ENCODE measurements at regions of chr20 and their contacts with region 1.

Region 1: DNA sequence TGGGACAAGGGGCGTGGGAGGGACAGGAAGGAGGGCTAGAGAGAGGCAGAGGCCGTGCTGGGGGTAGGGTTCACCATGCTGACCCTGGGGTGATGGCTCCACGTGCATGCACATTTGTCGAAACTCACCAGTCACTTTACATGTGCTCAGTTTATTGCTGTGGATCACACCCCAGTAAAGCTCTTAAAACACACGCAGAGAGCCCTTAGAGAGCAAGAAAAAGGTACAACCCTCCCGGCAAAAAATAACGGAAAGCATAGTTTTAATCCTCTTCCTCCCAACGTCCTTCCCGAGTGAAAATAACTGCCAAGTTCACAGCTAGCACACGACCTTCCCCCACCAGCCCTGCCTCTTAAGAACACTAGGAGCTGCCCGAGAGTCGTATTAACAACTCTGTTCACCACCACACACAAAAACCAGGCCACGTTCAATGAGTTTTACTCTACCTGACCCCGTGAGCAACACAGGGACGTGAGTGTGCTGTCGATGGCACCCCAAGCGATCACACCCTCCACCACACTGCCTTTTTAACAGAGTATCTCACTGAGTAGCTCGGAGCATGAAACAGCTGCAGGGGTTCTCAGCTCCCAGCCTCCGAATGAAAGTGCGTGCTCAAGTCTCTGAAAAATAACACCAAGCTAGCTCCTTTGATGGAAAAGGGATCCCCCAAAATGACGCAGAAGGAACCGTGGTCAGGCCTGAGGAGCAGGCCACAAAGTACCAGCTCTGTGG is 39.7 kb downstream of the TAF4 start:
- DNase-seq: no peak

Region 2: GRCh38 chr20:61925555-61926252 is 100.3 kb before region 1 on chr20:
- intact Hi-C with region 1: no loop called
- DNase-seq: no peak

Region 3: GRCh38 chr20:61958773-61959700 is 67.0 kb before region 1 on chr20:
- intact Hi-C with region 1: no loop called
- DNase-seq: peak; percentile 26

Region 4: DNA sequence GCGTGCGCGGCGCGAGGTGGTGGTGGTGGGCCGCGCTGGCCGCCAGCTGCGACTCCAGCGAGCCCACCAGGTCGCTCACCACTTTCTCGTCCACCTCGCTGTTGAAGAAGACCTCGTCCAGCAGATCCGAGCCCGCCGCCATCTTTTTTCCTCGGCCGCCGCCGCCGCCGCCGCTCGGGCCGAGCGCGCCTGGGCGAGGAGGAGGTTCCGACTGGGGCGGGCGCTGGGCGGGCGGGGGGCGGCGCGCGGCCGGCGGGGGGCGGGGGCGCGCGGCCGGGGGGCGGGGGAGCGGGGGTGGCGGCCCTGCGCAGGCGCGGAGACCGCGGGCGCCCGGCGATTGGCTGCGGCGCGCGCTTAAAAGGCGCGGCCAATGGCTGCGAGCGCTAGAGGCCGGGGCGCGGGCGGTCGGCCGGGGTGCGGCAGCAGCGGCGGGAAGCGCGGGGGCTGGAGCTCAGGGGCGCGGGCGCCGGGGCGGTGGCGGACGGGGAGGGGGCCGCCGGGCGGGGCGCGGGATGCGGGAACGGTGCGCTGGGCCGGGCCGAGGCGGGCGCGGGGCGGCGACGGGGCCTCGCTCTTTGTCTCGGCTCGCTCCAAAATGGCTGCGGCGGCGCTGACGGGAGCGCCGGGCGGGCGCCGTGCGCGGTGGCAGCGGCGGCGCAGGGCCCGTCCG is 39.8 kb after region 1 on chr20 and contains the start of gene TAF4:
- intact Hi-C with region 1: loop called (anchors 5 kb)
- DNase-seq: peak; percentile 90
- total RNA-seq, gene TAF4: 13.6 TPM

Region 5: GRCh38 chr20:62136283-62137091 is 110.5 kb after region 1 on chr20:
- intact Hi-C with region 1: loop called (anchors 5 kb)
- DNase-seq: no peak